Left ventricle myocardium superior (tissue), 1 donor: ENCODE measurements at regions of chr15 and their contacts with region 1.

Region 1: GRCh38 chr15:65054333-65055200 is 9.4 kb downstream of the SLC51B start:
- DNase-seq: peak; percentile 85
- ATAC-seq: peak; percentile 83

Region 2: DNA sequence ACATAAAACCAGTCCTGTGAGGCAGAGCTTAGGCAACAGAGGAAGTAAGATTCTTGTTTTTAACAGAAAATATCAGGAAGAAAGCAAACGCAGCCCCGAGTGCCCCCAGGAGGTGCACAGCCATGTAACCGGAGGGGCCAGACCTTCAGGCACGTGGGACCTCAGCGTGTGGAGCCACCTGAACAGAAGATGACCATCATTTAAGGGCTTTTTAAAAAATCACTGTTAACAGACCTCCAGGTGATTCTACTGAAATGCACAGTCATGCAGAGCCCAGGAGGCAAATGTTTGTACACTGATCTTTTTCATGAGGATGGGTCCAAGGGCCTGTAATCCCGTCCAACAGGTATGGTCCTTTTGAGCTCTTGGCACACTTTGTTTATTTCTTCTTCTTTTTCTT is 103.7 kb before region 1 on chr15:
- intact Hi-C with region 1: no loop called
- DNase-seq: no peak
- ATAC-seq: no peak

Region 3: GRCh38 chr15:65101411-65101890 is 46.9 kb after region 1 on chr15:
- intact Hi-C with region 1: loop called (anchors 2 kb)
- DNase-seq: peak; percentile 83
- ATAC-seq: peak; percentile 75

Region 4: GRCh38 chr15:65384895-65385858 is 330.6 kb after region 1 on chr15:
- intact Hi-C with region 1: no loop called
- DNase-seq: peak; percentile 89
- ATAC-seq: peak; percentile 96